ENCODE measurements at regions of chr2 and their contacts with region 1.

Region 1: DNA sequence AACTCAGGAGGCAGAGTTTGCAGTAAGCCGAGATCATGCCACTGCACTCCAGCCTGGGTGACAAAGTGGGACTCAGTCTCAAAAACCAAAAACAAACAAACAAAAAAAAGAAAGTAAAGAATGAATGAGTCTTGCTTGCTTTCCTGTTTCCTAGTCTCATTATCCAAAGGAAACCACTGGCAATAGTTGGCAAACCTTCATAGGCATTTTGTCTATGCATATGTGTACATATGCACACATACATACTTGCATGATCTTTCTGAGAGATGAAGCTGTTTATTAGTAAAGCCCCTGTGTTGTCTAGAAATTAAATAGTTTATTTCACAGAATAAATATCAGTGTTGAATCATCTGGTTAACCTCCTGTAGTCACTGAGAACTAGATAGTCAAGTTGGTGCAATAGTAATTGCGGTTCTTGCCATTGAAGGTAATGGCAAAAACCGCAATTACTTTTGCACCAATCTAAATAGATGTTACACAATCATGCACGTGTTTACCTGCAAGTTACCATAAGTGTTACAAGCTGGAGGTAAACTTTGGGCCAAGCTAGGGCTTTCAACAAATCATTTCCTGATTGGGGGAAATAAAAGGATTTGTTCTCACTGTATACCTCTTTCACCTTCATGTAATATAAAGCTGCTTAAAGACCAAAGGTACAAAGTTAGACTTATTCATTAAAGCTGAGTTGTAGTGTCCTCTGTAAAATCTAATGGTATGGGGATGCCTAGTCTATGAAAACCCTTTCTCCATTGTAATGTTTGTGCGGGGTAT is 24.7 kb downstream of the SLC20A1 start:
- DNase-seq: no peak
- H3K4me3 ChIP-seq: no peak overlapping the region
- H3K27ac ChIP-seq: no peak overlapping the region
- H3K4me1 ChIP-seq: no peaks in the 10 kb centered on the region
- H3K27me3 ChIP-seq: no peaks in the 10 kb centered on the region
- CTCF ChIP-seq: no peak

Region 2: GRCh38 chr2:112092286-112093041 is 578.0 kb before region 1 on chr2:
- CTCF ChIA-PET with region 1: interaction called, 11 read pairs
- POLR2A ChIA-PET with region 1: no interaction called
- intact Hi-C with region 1: no loop called
- DNase-seq: no peak
- H3K4me3 ChIP-seq: no peak overlapping the region
- H3K27ac ChIP-seq: no peak overlapping the region
- H3K4me1 ChIP-seq: no peaks in the 10 kb centered on the region
- H3K27me3 ChIP-seq: no peaks in the 10 kb centered on the region
- CTCF ChIP-seq: no peak

Region 3: GRCh38 chr2:112542123-112542983 is 128.1 kb before region 1 on chr2 and contains the start of gene POLR1B:
- CTCF ChIA-PET with region 1: no interaction called
- POLR2A ChIA-PET with region 1: interaction called, 28 read pairs
- intact Hi-C with region 1: no loop called
- DNase-seq: peak; percentile 88
- H3K4me3 ChIP-seq: peak within 1 kb of the TSS; percentile 78
- H3K27ac ChIP-seq: peak within 1 kb of the TSS; percentile 92
- H3K4me1 ChIP-seq: peaks cover 14% of the 10 kb centered on the region
- H3K27me3 ChIP-seq: no peaks in the 10 kb centered on the region
- CTCF ChIP-seq: no peak
- total RNA-seq, gene POLR1B: 53.9 and 70.0 TPM in 2 replicates

Region 4: GRCh38 chr2:112884869-112885505 is 214.6 kb after region 1 on chr2:
- CTCF ChIA-PET with region 1: no interaction called
- POLR2A ChIA-PET with region 1: no interaction called
- intact Hi-C with region 1: no loop called
- DNase-seq: peak; percentile 37
- H3K4me3 ChIP-seq: no peak overlapping the region
- H3K27ac ChIP-seq: no peak overlapping the region
- H3K4me1 ChIP-seq: no peaks in the 10 kb centered on the region
- H3K27me3 ChIP-seq: no peaks in the 10 kb centered on the region
- CTCF ChIP-seq: peak; percentile 87

Measured in A673 (cell line).